K562 (cell line): ENCODE measurements at regions of chr20 and their contacts with region 1.

Region 1: GRCh38 chr20:37185686-37186085 is 6.3 kb upstream of the MROH8 start:
- DNase-seq: no peak
- ATAC-seq: no peak
- H3K4me3 ChIP-seq: no peak overlapping the region
- H3K27ac ChIP-seq: no peak overlapping the region
- H3K4me1 ChIP-seq: peaks cover under 1 to 8% of the 10 kb centered on the region in 2 experiments; a peak in 4 of 5 replicates
- H3K27me3 ChIP-seq: no peaks in the 10 kb centered on the region
- CTCF ChIP-seq: no peak
- EP300 ChIP-seq: no peak
- POLR2A ChIP-seq: no peak
- RAD21 ChIP-seq: no peak

Region 2: DNA sequence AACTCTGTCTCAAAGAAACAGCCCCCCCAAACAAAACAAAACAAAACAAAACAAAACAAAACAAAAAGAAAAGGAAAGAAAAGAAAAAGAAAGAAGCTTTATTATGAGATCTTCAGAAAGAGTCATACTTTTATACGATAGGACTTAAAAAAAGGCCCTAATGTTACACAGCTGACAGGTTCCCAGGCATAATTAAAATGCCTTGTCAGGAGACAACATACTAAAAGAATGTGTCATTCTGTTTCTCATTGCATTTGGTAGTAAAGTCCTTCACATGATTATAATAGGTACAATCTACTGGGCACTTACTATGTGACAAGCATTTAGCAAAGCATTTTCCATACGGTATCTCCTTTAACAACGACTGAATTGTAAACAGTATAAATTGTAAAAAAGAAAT is 43.0 kb before region 1 on chr20:
- CTCF ChIA-PET with region 1: no interaction called
- POLR2A ChIA-PET with region 1: interaction called, 3 read pairs
- in situ Hi-C with region 1: no loop called
- intact Hi-C with region 1: loop called (anchors 5 kb)
- DNase-seq: no peak
- ATAC-seq: no peak
- H3K4me3 ChIP-seq: no peak overlapping the region
- H3K27ac ChIP-seq: no peak overlapping the region
- H3K4me1 ChIP-seq: no peaks in the 10 kb centered on the region
- H3K27me3 ChIP-seq: peaks cover 7 to 10% of the 10 kb centered on the region in 2 experiments; a peak in 3 of 5 replicates
- CTCF ChIP-seq: no peak
- EP300 ChIP-seq: no peak
- POLR2A ChIP-seq: no peak
- RAD21 ChIP-seq: no peak